Mammary epithelial cell (primary cell): ENCODE measurements at regions of chr7 and their contacts with region 1.

Region 1: DNA sequence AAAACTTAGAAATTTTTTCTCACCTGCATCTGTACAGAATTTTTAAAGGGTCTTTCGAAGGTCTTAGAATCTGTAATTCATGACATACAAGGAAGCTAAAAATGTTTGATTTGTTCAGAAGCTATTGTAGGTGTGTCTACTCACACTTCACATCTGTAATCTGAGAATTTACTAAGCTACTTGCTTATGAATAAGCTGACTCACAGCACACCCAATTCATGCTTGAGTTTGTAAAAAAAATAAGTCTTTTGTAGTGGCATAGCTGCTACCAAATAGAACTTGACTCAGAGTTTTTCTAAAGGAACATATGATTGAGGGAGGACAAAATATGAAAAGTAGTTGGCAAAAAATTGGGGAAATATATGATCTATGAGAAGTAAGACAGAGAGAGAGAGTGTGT is 12.7 kb upstream of the AGR2 start:
- DNase-seq: peak; percentile 75
- H3K4me3 ChIP-seq: no peak overlapping the region
- H3K27ac ChIP-seq: no peak overlapping the region
- H3K4me1 ChIP-seq: peaks cover 13% of the 10 kb centered on the region
- H3K27me3 ChIP-seq: no peaks in the 10 kb centered on the region
- CTCF ChIP-seq: no peak

Region 2: DNA sequence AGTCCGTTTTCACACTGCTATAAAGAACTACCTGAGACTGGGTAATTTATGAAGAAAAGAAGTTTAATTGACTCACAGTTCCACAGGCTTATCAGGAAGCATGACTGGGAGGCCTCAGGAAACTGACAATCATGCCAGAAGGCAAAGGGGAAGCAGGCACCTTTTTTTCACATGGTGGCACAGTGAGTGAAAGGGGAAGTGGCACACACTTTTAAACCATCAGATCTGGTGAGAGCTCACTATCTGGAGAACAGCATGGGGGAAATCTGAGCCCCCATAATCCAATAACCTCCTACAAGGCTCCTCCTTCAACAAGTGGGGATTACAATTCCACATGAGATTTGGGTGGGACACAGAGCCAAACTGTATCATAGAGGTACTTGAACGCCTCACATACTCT is 34.3 kb after region 1 on chr7:
- CTCF ChIA-PET with region 1: no interaction called
- dilution Hi-C with region 1: no loop called
- in situ Hi-C with region 1: no loop called
- intact Hi-C with region 1: loop called (anchors 5 kb)
- DNase-seq: no peak
- H3K4me3 ChIP-seq: no peak overlapping the region
- H3K27ac ChIP-seq: no peak overlapping the region
- H3K4me1 ChIP-seq: no peaks in the 10 kb centered on the region
- H3K27me3 ChIP-seq: no peaks in the 10 kb centered on the region
- CTCF ChIP-seq: no peak